ENCODE measurements at regions of chr11 and their contacts with region 1.

Region 1: GRCh38 chr11:11028017-11028692 is 170.3 kb upstream of the ZBED5 start:
- DNase-seq: peak; percentile 84
- ATAC-seq: peak; percentile 91
- H3K4me3 Mint-ChIP-seq: no peak overlapping the region
- H3K27ac Mint-ChIP-seq: no peak overlapping the region
- H3K4me1 Mint-ChIP-seq: no peaks in the 10 kb centered on the region
- H3K27me3 Mint-ChIP-seq: peaks cover 19% of the 10 kb centered on the region

Region 2: DNA sequence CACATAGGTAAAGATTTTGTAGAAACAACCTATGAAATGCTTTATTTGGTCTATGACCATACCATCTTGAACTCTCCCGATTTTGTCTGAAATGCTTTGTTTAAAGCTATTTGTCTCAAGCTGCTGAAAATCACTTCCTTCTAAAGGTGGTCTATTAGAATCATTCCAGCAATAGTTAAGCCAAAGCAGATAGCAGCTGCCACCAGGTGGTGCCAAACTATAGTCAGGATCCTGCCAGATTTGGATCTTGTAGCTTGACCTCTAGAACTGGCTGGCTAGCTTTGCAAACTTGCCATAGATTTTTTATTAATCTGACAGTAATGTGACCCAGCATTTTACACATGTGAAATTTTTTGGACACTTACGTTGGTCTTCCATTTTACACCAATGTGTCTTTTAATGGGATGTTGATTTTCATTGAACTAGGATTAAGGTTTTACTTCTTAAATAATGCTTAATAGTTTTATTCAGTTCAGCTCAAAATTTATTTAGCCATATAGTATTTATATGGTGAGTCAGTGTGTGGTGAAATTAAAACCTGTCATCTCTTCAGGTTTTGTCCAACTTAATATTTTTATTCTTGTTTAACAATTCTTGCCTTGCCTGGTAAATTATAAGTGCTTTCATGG is 257.4 kb before region 1 on chr11:
- CTCF ChIA-PET with region 1: interaction called, 18 read pairs
- POLR2A ChIA-PET with region 1: no interaction called
- DNase-seq: peak; percentile 54
- ATAC-seq: peak; percentile 53
- H3K4me3 Mint-ChIP-seq: no peak overlapping the region
- H3K27ac Mint-ChIP-seq: no peak overlapping the region
- H3K4me1 Mint-ChIP-seq: no peaks in the 10 kb centered on the region
- H3K27me3 Mint-ChIP-seq: no peaks in the 10 kb centered on the region

Region 3: GRCh38 chr11:10943968-10944367 is 84.2 kb before region 1 on chr11:
- CTCF ChIA-PET with region 1: interaction called, 15 read pairs
- POLR2A ChIA-PET with region 1: no interaction called
- DNase-seq: no peak
- ATAC-seq: no peak
- H3K4me3 Mint-ChIP-seq: no peak overlapping the region
- H3K27ac Mint-ChIP-seq: no peak overlapping the region
- H3K4me1 Mint-ChIP-seq: no peaks in the 10 kb centered on the region
- H3K27me3 Mint-ChIP-seq: peaks cover 12% of the 10 kb centered on the region

Region 4: GRCh38 chr11:11157185-11157584 is 129.0 kb after region 1 on chr11:
- CTCF ChIA-PET with region 1: interaction called, 51 read pairs
- POLR2A ChIA-PET with region 1: interaction called, 4 read pairs
- DNase-seq: peak; percentile 68
- ATAC-seq: peak; percentile 79
- H3K4me3 Mint-ChIP-seq: no peak overlapping the region
- H3K27ac Mint-ChIP-seq: no peak overlapping the region
- H3K4me1 Mint-ChIP-seq: peaks cover 19% of the 10 kb centered on the region
- H3K27me3 Mint-ChIP-seq: peaks cover 7% of the 10 kb centered on the region

Region 5: GRCh38 chr11:11265994-11266606 is 237.9 kb after region 1 on chr11:
- CTCF ChIA-PET with region 1: interaction called, 19 read pairs
- POLR2A ChIA-PET with region 1: no interaction called
- DNase-seq: peak; percentile 71
- ATAC-seq: peak; percentile 78
- H3K4me3 Mint-ChIP-seq: no peak overlapping the region
- H3K27ac Mint-ChIP-seq: no peak overlapping the region
- H3K4me1 Mint-ChIP-seq: no peaks in the 10 kb centered on the region
- H3K27me3 Mint-ChIP-seq: no peaks in the 10 kb centered on the region

Measured in activated CD8-positive, alpha-beta T cell treated with anti-CD3 and anti-CD28 coated beads, Interleukin-2, amount 10 ng/mL, durations not matched to agents 7 days and 5 days (primary cell).